ACHN (cell line): ENCODE measurements at regions of chr6 and their contacts with region 1.

Region 1: GRCh38 chr6:30396833-30397479 is 52.0 kb downstream of the RPP21 start:
- DNase-seq: peak; percentile 66

Region 2: DNA sequence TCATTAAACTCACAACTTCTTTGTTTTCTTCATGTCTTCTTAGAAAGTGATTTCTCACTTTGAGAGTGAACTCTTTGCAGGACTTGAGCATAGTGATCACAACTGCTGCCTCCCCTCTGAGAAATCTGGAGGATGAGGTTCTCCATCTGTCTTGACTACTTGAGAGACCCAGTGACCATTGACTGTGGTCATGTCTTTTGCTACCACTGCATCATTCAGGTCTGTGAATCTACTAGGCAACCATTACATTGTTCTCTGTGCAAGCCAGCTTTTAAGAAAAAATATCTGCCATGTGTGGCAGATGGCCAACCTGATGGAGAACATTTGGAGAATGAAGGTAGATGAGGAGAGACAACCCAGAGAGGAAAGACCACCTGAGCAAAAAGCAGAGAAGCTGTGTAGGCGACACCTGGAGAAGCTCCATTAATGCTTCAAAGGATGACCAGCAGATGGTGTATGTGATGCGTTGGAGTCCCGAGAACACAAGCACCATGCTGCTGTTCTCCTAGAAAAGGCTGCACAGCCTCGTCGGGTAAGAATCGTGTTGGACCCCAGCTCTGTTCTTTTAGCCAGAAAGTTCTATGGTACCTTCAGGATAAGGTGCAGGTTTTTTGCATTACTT is 158.7 kb before region 1 on chr6:
- in situ Hi-C with region 1: loop called (anchors 25 kb)
- DNase-seq: peak; percentile 21